Transverse colon (tissue), 4 donors: ENCODE measurements at regions of chr21 and their contacts with region 1.

Region 1: DNA sequence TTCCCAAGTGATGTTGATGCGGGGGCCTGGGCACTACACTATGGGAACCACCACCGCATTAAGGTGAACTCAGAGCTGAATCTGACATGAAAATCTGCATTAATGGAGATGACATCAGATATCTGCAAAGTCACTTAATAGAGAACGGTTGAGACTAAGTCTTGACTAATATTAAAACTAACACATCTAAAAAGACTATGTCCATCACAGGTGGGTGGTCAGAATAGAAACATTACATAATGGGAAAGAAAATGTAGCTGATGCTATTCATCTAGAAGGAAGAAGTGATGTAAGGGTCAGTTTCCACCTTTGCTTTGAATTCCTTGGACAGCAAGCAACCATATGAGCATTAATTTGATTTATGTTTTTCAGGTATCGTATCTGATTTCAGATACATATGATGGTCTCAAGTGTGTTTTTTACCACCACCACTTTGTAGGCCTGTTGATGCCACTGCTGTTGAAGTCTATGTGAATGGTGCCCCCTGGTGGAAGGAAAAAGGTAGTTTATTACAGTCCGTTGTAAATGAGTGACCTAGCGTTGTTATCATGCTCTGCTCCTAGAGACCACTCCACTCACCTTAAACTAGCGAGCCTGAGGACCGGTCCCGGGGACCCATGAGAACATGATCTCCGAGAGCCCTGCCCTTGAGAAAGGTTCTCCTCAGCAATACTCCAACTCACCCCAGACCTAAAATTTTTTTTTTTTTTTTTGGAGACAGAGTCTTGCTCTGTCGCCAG is 73.5 kb downstream of the BACH1 start:
- DNase-seq: peak; percentile 42
- H3K4me3 ChIP-seq: no peak overlapping the region
- H3K27ac ChIP-seq: no peak overlapping the region
- H3K4me1 ChIP-seq: no peaks in the 10 kb centered on the region
- H3K27me3 ChIP-seq: no peaks in the 10 kb centered on the region
- CTCF ChIP-seq: peak; percentile 74 to 85 (median 79)
- EP300 ChIP-seq: no peak
- POLR2A ChIP-seq: no peak

Region 2: DNA sequence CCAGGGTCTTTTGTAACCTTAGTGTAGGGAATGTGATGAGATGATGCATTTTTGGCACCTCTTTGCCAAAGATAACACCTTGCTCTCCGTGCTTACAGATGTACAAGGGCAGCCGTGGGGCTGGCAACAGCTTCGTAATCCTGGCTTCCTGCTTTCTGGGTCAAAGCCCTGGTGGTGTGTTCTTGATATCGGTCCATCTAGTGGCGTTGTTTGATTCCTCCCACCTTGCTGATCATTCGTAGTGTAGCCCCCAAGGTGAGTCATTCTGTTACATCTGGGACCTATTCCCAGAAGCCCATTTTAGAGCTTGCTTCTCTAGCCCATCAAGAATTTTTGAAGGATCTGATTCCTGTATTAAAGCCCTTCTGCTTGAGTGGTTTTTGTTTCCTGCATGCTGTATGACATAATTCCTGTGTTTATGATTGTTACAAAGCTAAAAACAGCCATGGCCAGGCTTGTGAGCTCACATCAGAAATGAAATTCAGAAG is 291.7 kb before region 1 on chr21:
- in situ Hi-C with region 1: loop called in 2 of 4 experiments (anchors 5 to 10 kb)
- intact Hi-C with region 1: no loop called
- DNase-seq: no peak
- H3K4me3 ChIP-seq: no peak overlapping the region
- H3K27ac ChIP-seq: no peak overlapping the region
- H3K4me1 ChIP-seq: peaks cover 0 to 13% (median under 1%) of the 10 kb centered on the region in 4 donors
- H3K27me3 ChIP-seq: no peaks in the 10 kb centered on the region
- CTCF ChIP-seq: no peak
- EP300 ChIP-seq: no peak
- POLR2A ChIP-seq: no peak

Region 3: DNA sequence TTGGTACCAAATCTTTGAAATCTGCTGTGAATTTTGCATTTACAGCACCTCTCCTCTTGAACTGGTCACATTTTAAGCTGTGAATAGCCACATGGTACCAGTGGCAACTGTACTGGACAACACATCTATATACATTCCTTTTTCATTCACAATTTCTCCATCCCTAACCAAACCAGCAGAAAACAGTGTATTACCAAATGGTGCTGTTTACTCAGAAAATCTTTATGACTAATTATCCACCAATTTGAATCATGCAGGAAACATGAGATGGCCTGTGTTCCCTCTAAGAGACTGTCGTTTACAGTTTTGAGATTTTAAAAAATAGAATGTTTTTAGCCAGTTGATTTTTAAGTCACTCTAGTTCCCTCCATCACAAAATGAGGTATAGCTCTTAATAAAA is 281.2 kb before region 1 on chr21:
- in situ Hi-C with region 1: loop called (anchors 5 to 10 kb)
- intact Hi-C with region 1: loop called (anchors 5 kb)
- DNase-seq: no peak
- H3K4me3 ChIP-seq: no peak overlapping the region
- H3K27ac ChIP-seq: no peak overlapping the region
- H3K4me1 ChIP-seq: peaks cover 0 to 7% (median 1%) of the 10 kb centered on the region in 4 donors
- H3K27me3 ChIP-seq: no peaks in the 10 kb centered on the region
- CTCF ChIP-seq: no peak
- EP300 ChIP-seq: no peak
- POLR2A ChIP-seq: no peak

Region 4: GRCh38 chr21:29098156-29098555 is 274.1 kb before region 1 on chr21:
- in situ Hi-C with region 1: loop called in 2 of 4 experiments (anchors 5 to 10 kb)
- intact Hi-C with region 1: loop called (anchors 5 kb)
- DNase-seq: no peak
- H3K4me3 ChIP-seq: no peak overlapping the region
- H3K27ac ChIP-seq: no peak overlapping the region
- H3K4me1 ChIP-seq: peaks cover 0 to 14% (median 0%) of the 10 kb centered on the region in 4 donors
- H3K27me3 ChIP-seq: no peaks in the 10 kb centered on the region
- CTCF ChIP-seq: no peak
- EP300 ChIP-seq: no peak
- POLR2A ChIP-seq: no peak

Region 5: DNA sequence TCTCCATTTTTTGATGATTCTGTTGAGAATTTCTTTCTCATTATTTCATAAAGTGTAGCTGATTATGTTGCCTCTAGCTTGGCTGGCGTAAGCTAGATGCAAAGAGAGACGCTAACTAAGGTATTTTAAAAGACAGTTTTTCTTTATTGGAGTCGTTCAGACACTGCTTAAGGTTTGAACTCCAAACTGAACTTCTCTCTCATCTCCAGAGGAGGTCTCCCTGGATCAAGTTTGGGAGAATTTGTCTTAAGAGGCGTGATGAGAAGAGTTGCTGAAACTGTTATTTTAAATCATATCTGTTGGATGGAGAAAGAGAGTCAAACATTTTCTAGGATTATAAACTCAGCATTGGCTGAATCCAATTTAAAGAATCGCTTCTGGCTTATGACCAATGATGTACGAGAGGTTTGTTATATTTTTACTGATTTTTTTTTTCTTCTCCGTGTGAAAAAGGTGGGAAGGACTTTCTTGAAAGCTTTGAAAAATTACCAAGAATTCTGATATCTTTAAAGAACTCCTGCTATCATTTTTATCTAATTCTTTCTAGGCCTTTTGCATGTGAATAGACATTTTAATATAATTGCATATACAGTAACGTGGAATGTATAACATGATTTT is 207.8 kb before region 1 on chr21:
- in situ Hi-C with region 1: loop called in 3 of 4 experiments (anchors 5 to 10 kb)
- intact Hi-C with region 1: loop called (anchors 2 kb)
- DNase-seq: no peak
- H3K4me3 ChIP-seq: no peak overlapping the region
- H3K27ac ChIP-seq: peak overlapping the region in 1 of 4 donors; percentile 2
- H3K4me1 ChIP-seq: peaks cover 0 to 15% (median 0%) of the 10 kb centered on the region in 4 donors
- H3K27me3 ChIP-seq: no peaks in the 10 kb centered on the region
- CTCF ChIP-seq: peak; percentile 58 to 80 (median 75)
- EP300 ChIP-seq: no peak
- POLR2A ChIP-seq: no peak

Region 6: GRCh38 chr21:29298348-29299045 is 73.7 kb before region 1 on chr21 and contains the start of gene BACH1:
- in situ Hi-C with region 1: no loop called
- intact Hi-C with region 1: loop called (anchors 5 kb)
- DNase-seq: peak; percentile 92
- H3K4me3 ChIP-seq: peak within 1 kb of the TSS; percentile 45 to 95 (median 76)
- H3K27ac ChIP-seq: peak within 1 kb of the TSS; percentile 96 to 97 (median 96)
- H3K4me1 ChIP-seq: peaks cover 11 to 58% (median 49%) of the 10 kb centered on the region in 4 donors
- H3K27me3 ChIP-seq: no peaks in the 10 kb centered on the region
- CTCF ChIP-seq: peak in 4 of 5 experiments; percentile 14 to 54 (median 22)
- EP300 ChIP-seq: no peak
- POLR2A ChIP-seq: peak; percentile 87
- total RNA-seq, gene BACH1: 31.8 to 92.1 (median 42.0) TPM